Activated T-helper 2 cell treated with anti-CD3 and anti-CD28 coated beads, Interferon-gamma antibody, Interleukin-2, Interleukin-4, amounts not matched to agents 10 μg/mL and 5 μg/mL and 100 μg/mL, durations not matched to agents 14 hours and 24 hours and 36 hours (primary cell): ENCODE measurements at regions of chr1 and their contacts with region 1.

Region 1: DNA sequence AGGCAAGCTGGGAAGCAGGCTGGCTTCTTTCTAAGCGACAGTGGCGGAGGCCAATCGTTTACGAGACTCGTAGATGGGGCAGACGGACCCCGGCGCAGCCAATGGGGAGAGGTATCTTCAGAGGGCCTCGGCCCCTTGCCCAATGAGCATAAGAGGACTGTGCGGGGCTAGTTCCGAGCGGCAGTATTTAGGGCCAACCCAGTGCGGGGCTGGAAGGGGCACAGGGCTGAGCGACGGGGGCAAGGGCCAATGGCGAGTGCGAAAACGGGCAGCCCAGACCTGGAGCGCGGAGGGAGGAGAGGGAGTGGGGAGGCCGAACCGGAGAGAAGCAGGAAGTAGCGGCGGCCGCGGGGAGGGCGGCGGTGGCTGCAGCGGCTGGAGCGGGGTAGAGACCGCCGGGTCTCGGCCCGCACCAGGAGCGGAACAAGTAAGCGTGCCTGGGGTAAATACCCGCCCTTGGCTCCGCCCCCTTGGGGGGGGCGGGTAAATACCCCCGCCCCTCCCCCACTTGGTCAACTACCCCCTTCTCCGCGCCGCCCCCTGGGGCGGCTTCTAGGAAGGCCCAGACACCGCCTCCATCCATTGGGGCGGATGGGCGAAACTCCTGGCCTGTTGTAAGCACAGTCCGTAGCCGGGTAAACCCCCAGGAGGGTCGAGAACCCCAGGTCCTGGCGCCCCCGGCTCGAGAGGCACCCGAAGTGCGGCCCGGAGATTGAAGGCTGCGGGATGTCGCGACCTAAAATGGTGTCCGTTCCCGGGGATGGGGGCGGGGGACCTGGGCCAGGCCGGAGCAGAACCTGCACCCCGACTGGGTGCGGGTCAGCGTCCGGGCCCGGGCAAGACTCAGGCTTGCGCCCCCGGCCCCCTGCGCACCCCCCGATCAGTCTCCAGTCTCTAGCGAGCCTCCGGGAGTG is at the start of gene ZNF687:
- DNase-seq: peak; percentile 99
- H3K4me3 Mint-ChIP-seq: peak within 1 kb of the TSS; percentile 99
- H3K27ac Mint-ChIP-seq: peak within 1 kb of the TSS; percentile 99
- H3K4me1 Mint-ChIP-seq: peaks cover 28% of the 10 kb centered on the region
- H3K27me3 Mint-ChIP-seq: no peaks in the 10 kb centered on the region
- total RNA-seq, gene ZNF687: 25.0 and 25.3 TPM in 2 replicates

Region 2: GRCh38 chr1:151070474-151071276 is 211.6 kb before region 1 on chr1 and contains the start of gene GABPB2:
- intact Hi-C with region 1: loop called (anchors 2 kb)
- DNase-seq: peak; percentile 82
- H3K4me3 Mint-ChIP-seq: peak within 1 kb of the TSS; percentile 100
- H3K27ac Mint-ChIP-seq: peak within 1 kb of the TSS; percentile 100
- H3K4me1 Mint-ChIP-seq: peaks cover 12% of the 10 kb centered on the region
- H3K27me3 Mint-ChIP-seq: no peaks in the 10 kb centered on the region
- total RNA-seq, gene GABPB2: 14.4 and 15.9 TPM in 2 replicates

Region 3: DNA sequence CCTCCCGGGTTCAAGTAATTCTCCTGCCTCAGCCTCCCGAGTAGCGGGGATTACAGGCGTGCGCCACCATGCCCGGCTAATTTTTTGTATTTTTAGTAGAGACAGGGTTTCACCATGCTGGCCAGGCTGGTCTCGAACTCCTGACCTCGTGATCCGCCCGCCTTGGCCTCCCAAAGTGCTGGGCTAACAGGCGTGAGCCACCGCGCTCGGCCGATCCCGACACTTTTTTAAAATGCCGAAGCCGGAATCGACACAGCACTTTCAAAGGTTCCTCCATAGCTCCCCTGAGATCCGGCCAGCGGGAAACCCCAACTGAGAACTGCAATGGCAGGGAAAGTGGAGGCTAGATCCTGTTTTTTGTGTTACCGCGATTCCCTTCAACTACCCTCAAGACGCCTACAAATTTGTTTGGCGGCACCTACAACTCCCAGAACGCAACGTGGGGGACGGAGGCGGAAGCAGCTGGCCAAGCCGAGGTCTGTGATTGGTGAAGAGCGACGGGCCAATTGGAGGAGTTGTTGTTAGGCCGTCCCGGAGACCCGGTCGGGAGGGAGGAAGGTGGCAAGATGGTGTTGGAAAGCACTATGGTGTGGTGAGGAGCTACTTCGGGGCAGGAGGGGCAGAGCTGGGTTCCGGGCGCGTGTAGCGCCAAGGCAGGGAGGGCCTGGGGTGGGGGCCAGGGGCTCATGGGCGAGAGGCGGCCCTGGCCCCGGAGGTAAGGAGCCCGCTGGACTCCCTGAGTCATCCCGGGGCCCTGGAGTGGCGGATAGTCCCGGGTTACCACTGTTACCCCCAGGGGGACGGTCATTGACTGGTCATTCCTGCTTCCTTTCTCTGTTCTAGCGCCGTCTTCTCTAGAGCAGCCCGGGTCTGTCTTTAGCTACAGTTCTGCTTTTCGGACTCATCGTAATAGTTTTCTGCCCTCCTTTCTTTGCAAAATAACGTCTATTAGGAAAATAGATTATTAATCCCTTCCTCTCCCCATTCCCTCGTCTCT is 27.7 kb before region 1 on chr1 and contains the start of gene PSMD4:
- intact Hi-C with region 1: loop called (anchors 1 kb)
- DNase-seq: peak; percentile 92
- H3K4me3 Mint-ChIP-seq: peak within 1 kb of the TSS; percentile 98
- H3K27ac Mint-ChIP-seq: peak within 1 kb of the TSS; percentile 92
- H3K4me1 Mint-ChIP-seq: peaks cover 17% of the 10 kb centered on the region
- H3K27me3 Mint-ChIP-seq: no peaks in the 10 kb centered on the region
- total RNA-seq, gene PSMD4: 271 and 280 TPM in 2 replicates

Region 4: GRCh38 chr1:151346769-151347522 is 64.7 kb after region 1 on chr1 and contains the start of gene RFX5:
- intact Hi-C with region 1: loop called (anchors 1 kb)
- DNase-seq: peak; percentile 95
- H3K4me3 Mint-ChIP-seq: peak within 1 kb of the TSS; percentile 94
- H3K27ac Mint-ChIP-seq: peak within 1 kb of the TSS; percentile 99
- H3K4me1 Mint-ChIP-seq: peaks cover 29% of the 10 kb centered on the region
- H3K27me3 Mint-ChIP-seq: no peaks in the 10 kb centered on the region
- total RNA-seq, gene RFX5: 68.9 and 85.5 TPM in 2 replicates